HEK293T (cell line): ENCODE measurements at regions of chr1 and their contacts with region 1.

Region 1: DNA sequence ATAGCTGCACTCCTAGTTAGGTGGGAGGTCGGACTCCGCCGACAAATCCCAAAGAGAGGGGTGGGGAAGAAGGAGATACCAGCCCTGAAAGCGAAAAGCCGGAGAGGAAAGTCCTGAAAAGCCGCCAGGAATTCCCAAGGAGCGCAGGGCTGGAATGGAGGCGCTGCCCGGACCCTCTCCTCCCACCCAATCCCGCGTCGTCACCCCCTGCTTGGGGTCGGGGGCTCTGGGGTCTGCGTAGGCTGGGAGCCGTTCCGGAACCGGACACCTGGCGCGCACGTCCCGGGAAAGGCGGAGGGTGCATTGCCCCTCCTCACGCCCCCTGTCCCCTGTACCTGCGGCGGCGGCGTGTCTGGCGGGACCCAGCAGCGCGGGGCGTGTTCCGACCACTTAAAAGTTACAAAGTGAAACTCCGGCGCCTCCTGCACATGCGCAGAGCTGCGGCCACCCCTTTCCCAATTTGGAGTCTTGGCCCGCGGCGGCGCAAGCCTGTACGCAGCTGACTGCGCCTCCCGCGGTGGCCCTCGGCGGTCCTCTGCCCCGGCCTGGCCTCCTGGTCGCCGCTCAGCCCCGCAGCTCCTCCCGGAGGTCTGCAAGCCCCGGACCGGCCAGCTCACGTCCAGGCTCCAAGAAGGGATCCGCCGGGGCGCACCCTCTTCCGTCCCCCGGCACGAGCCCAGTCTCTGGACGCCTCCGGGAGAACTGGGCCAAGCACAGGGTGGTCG is at the start of gene TMEM63A:
- DNase-seq: peak; percentile 98

Region 2: DNA sequence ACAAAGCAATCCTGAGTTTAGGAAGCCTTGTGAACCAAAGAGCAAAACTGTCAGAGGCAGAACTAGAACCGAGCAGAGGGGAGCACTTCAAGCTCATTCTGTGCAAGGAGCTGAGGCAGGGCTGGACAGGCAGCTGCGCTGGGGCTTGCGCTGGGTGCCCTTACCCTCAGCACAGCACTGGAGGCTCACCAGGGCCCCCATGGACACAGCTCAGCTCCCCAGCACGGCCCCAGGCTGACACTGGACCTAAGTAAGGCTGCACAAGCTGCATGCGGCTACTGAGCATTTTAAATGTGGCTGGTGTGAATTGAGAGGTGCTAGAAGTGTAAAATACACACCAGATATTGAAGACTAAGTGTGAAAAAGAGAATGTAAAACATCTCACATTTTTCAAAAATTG is 22.0 kb before region 1 on chr1:
- CTCF ChIA-PET with region 1: no interaction called
- POLR2A ChIA-PET with region 1: interaction called, 12 read pairs
- DNase-seq: no peak

Region 3: DNA sequence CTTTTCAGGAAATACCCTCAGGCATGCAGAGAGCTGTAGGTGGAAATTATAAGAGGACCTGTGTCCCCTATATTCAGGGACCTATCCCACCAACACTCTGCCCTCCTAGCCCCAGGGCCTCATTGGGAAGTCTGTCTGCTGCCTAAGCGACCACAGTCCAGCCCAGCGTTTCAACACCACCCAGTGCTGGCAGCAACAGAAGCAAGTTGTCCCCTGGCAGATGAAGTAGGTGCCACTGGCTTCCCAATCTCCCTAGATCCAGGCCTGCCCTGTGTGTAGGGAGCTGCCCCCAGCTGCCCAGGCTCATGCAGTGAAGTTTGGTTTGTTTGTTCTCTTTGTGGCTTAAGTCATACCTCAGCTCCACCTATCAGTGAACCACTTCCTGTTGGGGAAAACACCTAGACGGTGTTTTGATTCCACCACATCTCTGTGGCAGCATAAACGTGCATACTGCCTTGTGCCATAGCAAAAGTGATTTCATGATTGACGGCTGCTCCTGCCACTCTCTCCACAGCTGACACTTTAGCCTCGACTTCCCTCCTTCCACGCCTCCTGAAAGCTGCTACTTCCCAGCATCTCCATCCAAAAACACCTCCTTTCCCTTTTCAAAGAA is 14.9 kb after region 1 on chr1:
- CTCF ChIA-PET with region 1: interaction called, 5 read pairs
- POLR2A ChIA-PET with region 1: interaction called, 18 read pairs
- DNase-seq: no peak

Region 4: GRCh38 chr1:225923692-225924555 is 41.8 kb after region 1 on chr1 and contains the start of gene PYCR2:
- CTCF ChIA-PET with region 1: interaction called, 3 read pairs
- POLR2A ChIA-PET with region 1: interaction called, 39 read pairs
- DNase-seq: peak; percentile 100